ENCODE measurements at regions of chr20 and their contacts with region 1.

Region 1: DNA sequence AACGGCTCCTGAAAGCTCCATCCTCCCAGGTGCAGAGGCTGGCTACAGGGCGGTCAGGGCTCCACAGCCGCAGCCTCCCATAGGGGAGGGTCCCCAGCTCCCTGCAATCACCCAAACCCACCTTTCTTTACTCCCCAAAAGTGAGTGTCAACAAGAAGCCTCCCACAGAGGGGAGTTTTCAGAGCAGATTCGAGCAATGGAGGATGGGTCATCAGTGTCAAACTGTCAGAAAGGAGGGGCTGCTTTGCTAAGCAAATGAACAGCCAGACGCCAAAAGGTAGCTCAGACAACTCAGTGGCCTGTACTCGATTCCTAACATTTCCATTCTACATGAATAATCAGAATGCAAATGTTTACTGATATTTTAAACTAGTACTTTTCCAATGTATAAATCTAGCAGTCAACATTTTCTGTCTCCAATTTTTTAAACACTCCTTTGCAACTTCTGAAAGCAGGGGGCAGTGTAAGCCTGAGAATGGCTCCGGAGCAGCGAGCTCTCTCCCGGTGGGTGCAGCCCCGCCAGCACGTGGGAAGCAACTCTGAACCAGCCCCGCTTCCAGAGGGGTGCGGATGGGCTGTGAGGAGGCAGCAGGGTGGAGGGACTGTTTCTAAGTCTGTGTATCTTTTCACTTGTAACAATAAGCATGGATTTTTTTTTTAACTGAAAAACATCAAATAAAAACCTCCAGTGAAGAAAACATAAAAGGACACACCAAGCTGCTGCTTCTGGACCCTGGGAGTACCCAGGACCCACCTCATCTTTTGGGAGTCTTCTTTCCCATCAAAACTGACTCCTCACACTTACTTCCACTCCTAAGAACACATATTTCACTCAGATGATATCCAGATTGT is 54.9 kb downstream of the TAF4 start:
- DNase-seq: no peak
- H3K4me3 ChIP-seq: no peak overlapping the region
- H3K27ac ChIP-seq: no peak overlapping the region
- H3K4me1 ChIP-seq: no peaks in the 10 kb centered on the region
- H3K27me3 ChIP-seq: no peaks in the 10 kb centered on the region
- CTCF ChIP-seq: peak in 2 of 3 donors; percentile 55 to 67
- POLR2A ChIP-seq: no peak

Region 2: DNA sequence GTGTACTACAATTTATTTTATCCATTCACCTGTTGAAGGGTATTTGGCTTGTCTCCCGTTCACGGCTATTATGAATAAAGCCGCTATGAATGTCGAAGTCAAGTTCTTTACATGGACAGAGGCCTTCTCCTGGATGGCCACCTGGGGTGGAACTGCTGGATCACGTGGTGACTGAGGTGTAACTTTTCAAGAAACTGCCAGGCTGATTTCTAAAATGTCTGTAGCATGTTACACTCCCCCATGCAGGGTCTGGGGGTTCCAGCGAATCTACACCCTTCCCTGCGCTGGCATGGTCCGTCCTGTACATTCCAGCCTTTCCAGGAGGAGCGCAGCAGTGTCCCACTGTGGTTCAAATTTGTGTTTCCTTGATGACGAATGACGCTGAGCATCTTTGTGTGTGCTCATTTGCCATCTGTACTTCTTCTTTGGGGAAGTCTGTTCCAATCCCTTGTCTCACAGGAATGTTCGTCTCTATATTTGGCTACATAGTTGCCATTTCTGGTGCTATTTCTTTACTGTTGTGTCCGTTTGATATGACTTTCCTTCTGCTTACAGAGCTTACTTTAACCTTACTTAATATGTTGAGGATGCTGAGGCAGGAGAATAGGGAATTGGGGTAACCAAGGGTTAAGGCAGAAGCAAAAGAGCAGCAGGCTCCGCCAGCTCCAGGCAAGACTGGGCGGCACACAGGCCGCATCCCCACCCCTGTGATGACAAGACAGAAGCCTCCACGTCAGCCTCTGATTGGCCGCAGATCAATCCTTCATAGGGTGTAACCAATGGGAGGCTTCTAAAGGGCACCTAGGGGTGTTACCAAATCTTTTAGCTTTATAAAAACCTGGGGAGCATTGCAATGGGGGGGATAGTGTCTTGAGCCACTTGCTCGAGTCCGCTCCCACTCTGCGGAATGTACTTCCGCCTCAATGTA is 51.7 kb before region 1 on chr20:
- intact Hi-C with region 1: loop called (anchors 2 kb)
- DNase-seq: no peak
- H3K4me3 ChIP-seq: no peak overlapping the region
- H3K27ac ChIP-seq: no peak overlapping the region
- H3K4me1 ChIP-seq: no peaks in the 10 kb centered on the region
- H3K27me3 ChIP-seq: peaks cover 0 to 7% of the 10 kb centered on the region in 2 donors
- CTCF ChIP-seq: no peak
- POLR2A ChIP-seq: no peak

Region 3: DNA sequence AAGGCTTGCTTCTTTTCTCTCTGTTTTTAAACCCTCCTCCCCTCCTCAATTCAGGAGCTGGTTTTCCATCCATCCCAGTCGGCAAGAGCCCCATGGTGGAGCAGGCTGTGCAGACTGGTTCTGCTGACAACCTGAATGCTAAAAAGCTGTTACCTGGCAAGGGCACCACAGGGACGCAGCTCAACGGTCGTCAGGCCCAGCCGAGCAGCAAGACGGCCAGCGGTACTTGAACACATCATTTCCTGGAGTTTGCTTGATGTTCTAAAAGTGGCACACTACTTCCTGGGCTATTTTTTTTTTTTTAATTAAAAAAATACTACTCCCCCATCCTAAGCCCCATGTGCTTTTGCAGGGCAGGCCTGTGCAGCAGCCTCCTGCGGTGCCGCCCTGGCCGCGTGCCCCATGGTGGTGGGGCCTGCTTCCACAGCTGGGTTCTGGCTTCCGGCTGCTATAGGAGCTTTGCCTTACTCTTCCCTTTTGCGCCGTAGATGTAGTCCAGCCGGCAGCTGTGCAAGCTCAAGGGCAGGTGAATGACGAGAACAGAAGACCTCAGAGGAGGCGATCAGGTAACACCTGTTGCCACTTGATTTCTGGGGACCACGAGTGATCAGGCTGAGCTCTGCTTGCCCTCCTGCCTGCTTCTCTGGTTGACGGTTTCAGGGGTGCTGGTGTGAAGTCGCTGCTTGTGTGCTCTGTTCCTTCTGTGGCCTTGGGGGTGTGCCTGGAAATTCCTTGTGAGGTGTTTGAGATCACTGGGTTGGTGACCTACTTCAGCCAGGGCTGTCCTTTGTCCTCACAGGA is 119.2 kb after region 1 on chr20:
- intact Hi-C with region 1: loop called (anchors 1 kb)
- DNase-seq: no peak
- H3K4me3 ChIP-seq: no peak overlapping the region
- H3K27ac ChIP-seq: no peak overlapping the region
- H3K4me1 ChIP-seq: no peaks in the 10 kb centered on the region
- H3K27me3 ChIP-seq: no peaks in the 10 kb centered on the region
- CTCF ChIP-seq: no peak
- POLR2A ChIP-seq: no peak

Measured in breast epithelium (tissue), 4 donors.